ENCODE measurements at regions of chr12 and their contacts with region 1.

Region 1: DNA sequence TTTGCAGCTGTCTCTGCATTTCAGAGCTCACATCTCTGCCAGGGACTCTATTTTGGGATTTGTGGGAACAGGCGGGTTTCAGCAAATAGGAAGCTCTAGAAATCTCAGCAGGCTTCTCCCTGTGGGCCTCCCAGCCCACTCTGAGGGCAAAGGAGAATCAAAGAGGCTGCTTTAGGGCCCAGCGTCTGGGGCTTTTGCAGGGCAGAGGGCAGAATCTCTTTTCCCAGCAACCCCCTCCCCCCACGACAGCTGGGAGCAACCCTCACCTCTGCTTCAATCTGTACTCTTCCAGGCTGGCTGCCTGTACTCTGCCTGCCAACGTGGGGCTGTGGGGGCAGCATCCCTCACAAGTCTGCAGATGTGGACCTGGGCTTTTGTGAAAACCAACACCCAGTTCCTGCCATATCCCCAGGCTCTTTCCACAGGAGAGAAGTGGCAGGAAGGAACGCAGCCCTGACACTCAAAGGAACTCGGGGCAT is 529.6 kb upstream of the TBX3 start:
- DNase-seq: peak; percentile 32 to 40
- ATAC-seq: peak; percentile 62 to 87 (median 76)
- H3K4me3 ChIP-seq: no peak overlapping the region
- H3K27ac ChIP-seq: peak overlapping the region in 7 of 10 donors; percentile 18 to 73 (median 46)
- H3K4me1 ChIP-seq: peaks cover 0 to 17% (median 9%) of the 10 kb centered on the region in 9 donors
- H3K27me3 ChIP-seq: peaks cover 0 to 2% (median 0%) of the 10 kb centered on the region in 7 donors
- CTCF ChIP-seq: no peak

Region 2: GRCh38 chr12:115103884-115104883 is 109.4 kb before region 1 on chr12:
- intact Hi-C with region 1: loop called in 1 of 10 experiments (anchors 10 kb)
- DNase-seq: peak; percentile 32 to 54
- ATAC-seq: peak; percentile 51 to 88 (median 78)
- H3K4me3 ChIP-seq: no peak overlapping the region
- H3K27ac ChIP-seq: peak overlapping the region in 7 of 10 donors; percentile 19 to 51 (median 43)
- H3K4me1 ChIP-seq: peaks cover 0 to 23% (median 10%) of the 10 kb centered on the region in 9 donors
- H3K27me3 ChIP-seq: no peaks in the 10 kb centered on the region
- CTCF ChIP-seq: no peak

Measured in heart right ventricle (tissue), 16 donors.